Esophagus squamous epithelium (tissue), 5 donors: ENCODE measurements at regions of chr20 and their contacts with region 1.

Region 1: DNA sequence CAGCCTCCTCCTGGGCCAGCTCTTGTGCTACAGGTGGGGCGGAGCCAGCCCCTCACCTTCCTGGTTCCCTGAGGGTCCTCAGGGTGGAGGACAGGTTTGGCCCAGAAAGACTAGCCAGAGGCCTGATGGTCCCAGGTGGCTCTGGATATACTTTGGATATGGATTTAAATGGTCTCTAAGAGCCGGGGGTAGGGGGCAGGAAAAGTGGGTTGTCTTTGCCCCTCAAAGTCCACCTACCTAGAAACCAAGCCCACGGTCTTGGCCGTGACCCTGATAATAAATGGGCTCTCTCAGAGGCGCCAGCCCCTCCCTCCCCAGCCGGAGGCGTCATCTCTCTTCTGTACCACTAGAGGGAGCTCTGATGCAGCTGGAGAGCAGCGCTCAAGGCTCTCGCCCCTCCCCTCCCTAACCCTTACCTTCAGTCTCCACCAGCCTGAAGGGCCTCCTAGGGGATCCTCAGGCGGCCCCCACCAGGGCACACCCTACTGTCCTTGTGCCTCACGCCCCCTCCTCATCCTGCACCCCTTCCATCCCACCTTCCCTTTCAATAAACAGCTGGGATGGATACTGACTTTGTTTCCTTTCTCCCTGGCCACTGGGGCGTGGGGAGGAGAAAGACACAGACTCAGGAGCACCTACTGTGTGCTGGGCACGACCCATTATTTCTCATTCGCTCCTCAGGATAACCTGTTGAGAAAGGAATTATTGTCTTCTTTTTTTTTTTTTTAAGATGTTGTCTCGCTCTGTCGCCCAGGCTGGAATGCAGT is 7.6 kb downstream of the NRSN2 start:
- DNase-seq: peak; percentile 26
- H3K4me3 ChIP-seq: no peak overlapping the region
- H3K27ac ChIP-seq: no peak overlapping the region
- H3K4me1 ChIP-seq: peaks cover 0 to 8% (median 7%) of the 10 kb centered on the region in 3 donors
- H3K27me3 ChIP-seq: no peaks in the 10 kb centered on the region
- CTCF ChIP-seq: peak; percentile 85 to 95 (median 92)
- POLR2A ChIP-seq: no peak

Region 2: DNA sequence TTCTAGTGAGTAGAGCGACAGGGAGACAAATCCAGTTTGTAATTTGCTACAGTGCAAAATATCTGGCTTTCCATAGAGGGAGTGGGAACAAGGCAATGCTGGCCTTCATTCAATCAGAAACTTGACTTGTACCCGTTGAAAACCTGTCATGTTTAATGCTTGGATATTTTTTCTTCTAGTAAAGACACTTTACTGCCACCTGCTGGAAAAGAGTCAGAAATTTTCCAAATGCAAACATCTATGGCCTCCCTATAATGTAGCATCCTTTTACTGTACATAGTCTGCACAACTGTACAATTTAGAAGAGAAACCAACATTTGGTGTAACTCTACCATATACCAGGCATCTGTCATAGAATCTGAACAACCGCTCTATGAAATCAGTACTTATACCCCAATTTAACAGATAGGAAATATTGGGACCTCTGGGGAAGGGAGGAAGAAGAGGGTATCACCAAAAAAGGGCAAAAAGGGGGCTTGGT is 124.5 kb after region 1 on chr20:
- intact Hi-C with region 1: loop called (anchors 5 kb)
- DNase-seq: no peak
- H3K4me3 ChIP-seq: no peak overlapping the region
- H3K27ac ChIP-seq: no peak overlapping the region
- H3K4me1 ChIP-seq: peaks cover 0 to 21% (median 0%) of the 10 kb centered on the region in 3 donors
- H3K27me3 ChIP-seq: no peaks in the 10 kb centered on the region
- CTCF ChIP-seq: peak in 5 of 6 experiments; percentile 44 to 70 (median 61)
- POLR2A ChIP-seq: no peak